ENCODE measurements at regions of chr17 and their contacts with region 1.

Region 1: DNA sequence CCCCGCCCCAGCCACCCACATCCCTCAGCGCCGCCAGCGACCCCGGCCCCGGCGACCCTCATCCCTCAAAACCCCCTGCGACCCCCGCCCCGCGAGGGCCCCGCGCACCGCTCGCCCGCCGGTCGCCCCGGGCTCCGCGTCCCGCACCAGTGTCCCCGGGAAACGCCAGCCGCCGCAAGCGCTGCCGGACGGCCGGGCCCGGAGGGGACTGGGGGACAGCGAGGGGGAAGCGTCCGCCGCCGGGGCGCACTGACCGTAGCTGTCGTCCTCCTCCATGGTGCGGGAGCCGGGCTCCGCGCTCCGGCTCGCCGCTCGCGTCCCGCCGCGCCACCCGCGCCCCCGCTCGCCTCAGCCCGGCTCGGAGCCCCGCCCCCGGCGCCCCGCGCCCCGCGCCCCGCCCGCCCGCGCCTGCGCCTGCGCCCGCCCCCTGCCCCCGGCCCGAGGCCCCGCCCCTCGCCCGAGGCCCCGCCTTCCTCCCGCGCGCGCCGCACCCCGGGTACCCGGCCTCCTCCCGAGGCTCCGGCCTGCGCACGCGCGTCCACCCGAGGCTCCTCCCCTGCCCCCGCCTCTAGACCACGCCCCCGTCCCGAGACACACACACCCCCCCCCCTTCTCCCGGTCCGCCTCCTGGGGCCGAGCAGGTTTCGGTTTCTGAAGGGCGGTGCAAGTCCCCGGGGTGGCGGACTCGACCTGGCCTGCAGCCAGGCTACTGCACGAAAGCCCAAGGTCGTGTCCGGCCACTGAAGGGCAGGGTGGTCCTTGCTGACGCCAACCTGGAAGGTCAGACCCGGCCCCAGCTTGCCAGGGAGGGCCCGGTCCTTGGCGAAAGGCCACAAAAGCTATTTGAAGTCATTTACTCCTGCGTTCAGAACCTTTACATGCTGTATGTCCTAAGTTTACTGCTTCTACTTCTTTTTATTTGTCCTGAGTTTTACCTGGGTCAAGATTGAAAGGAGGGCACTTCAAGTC is at the start of gene CYTH1:
- DNase-seq: peak; percentile 92 to 97 (median 94)
- H3K4me3 ChIP-seq: peak within 1 kb of the TSS; percentile 69 to 98 (median 86)
- H3K27ac ChIP-seq: peak within 1 kb of the TSS; percentile 38 to 99 (median 94)
- H3K27me3 ChIP-seq: no peaks in the 10 kb centered on the region
- CTCF ChIP-seq: peak in 1 of 56 donors; percentile 2
- total RNA-seq, gene CYTH1: 70.0 to 339 (median 108) TPM

Region 2: DNA sequence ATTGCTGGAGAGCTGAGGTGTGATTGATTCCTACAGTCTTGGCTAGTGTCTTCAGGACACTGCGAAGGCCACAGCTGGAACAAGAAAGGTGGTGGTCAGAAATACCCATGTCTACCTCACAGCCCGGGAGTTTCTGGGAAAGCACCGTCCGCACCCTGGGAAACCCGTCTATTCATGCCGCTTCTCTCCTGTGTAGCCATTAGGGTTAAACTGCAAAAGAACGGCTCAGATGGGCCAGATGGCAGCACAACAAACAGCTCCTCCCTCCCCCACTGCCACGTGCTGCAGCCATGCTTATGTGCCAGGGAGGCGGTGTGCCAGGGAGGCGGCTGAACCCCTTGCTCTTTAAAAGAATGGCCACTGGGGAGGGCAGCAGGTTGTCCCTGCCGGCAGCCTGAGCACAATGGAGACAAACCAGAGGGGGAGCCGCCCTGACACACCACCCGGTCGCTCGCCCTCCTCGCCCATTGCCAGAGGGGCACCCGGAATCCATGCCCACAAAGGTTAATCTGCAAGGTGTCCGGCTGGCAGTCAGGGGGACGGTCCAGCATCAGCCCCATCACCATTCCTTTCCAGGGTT is 65.3 kb before region 1 on chr17:
- intact Hi-C with region 1: loop called in 1 of 2 experiments (anchors 1 kb)
- DNase-seq: peak; percentile 91 to 97 (median 94)
- H3K4me3 ChIP-seq: peak overlapping the region; percentile 39 to 93 (median 61)
- H3K27ac ChIP-seq: peak overlapping the region; percentile 79 to 99 (median 96)
- H3K27me3 ChIP-seq: no peaks in the 10 kb centered on the region
- CTCF ChIP-seq: peak in 25 of 56 donors; percentile 10 to 41 (median 28)

Region 3: GRCh38 chr17:78723001-78723796 is 59.0 kb before region 1 on chr17:
- intact Hi-C with region 1: loop called in 1 of 2 experiments (anchors 1 kb)
- DNase-seq: peak; percentile 86 to 96 (median 95)
- H3K4me3 ChIP-seq: peak overlapping the region; percentile 59 to 93 (median 78)
- H3K27ac ChIP-seq: peak overlapping the region; percentile 86 to 99 (median 97)
- H3K27me3 ChIP-seq: no peaks in the 10 kb centered on the region
- CTCF ChIP-seq: peak in 14 of 56 donors; percentile 6 to 46 (median 16)

Region 4: DNA sequence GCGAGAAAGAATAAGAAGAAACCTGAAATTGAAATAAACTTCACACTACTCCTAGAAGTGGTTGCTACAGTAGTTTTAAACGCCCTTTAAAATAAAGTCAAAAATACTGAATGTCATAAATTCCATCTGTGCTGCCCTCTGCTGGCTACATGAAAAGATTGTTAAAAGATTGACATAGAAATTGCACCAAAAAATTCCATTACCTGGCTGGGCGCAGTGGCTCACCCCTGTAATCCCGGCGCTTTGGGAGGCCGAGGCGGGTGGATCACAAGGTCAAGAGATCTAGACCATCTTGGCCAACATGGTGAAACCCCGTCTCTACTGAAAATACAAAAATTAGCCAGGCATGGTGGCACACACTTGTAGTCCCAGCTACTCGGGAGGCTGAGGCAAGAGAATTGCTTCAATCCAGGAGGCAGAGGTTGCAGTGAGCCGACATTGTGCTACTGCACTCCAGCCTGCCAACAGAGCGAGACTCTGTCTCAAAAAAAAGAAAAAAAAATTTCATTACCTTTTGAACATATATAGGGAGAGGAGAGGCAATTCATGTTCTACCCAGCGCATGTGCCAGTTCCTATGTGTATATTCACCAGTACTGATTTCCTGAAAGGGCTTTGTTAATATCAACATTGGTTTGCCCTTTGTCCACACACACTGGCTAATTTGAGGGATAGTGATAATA is 36.7 kb before region 1 on chr17:
- intact Hi-C with region 1: no loop called
- DNase-seq: peak in 1 of 10 donors; percentile 46
- H3K4me3 ChIP-seq: peak overlapping the region in 1 of 59 donors; percentile 8
- H3K27ac ChIP-seq: peak overlapping the region in 24 of 59 donors; percentile 2 to 61 (median 24)
- H3K27me3 ChIP-seq: no peaks in the 10 kb centered on the region
- CTCF ChIP-seq: peak; percentile 61 to 86 (median 76)

Region 5: DNA sequence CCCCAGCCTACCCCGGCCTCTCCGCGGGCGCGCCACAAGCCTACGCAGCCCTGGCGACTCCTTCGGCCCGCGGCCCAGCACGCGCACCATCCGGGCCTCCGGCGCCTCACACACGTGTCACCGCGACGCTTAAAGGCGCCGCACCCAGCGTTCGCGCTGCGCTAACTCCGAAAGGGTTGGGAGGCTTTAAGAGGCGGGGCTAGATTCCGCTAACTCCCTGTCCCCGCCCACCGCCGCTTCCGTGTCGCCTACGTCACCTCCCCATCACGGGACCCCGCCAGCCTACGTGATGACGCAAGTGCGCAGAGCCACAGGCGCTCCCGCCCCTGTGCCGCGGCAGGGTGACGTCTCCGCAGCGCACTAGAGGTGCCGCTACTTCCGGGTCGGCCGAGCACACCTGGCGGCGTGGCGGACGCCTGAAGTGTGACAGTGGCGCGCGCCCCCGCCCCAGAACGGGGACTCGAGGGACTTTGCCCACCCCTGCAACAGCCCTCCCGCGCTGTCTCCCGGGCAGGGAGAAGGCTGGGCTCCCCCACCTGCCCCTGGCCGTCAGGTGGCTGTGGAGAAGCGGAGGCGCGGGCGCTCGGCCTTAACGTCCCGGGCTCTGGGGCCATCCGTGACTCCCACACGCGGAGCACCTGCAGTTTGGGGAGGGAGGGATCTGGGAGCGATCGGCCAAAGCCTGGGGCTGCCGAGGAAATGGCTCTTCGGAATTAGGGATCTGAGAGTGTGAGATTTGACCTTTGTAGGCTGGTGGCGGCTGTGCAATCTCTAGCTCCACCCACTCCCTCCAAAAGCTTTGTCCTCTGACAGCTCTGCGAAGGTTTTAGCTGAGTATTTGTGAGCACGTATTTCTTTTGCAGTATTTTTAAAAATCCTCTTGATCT is 58.7 kb after region 1 on chr17 and contains the start of gene USP36:
- intact Hi-C with region 1: loop called in 1 of 2 experiments (anchors 5 kb)
- DNase-seq: peak; percentile 100
- H3K4me3 ChIP-seq: peak within 1 kb of the TSS; percentile 76 to 100 (median 97)
- H3K27ac ChIP-seq: peak within 1 kb of the TSS; percentile 88 to 100 (median 97)
- H3K27me3 ChIP-seq: no peaks in the 10 kb centered on the region
- CTCF ChIP-seq: peak in 27 of 56 donors; percentile 5 to 53 (median 29)
- total RNA-seq, gene USP36: 39.1 to 90.9 (median 60.5) TPM

Measured in dorsolateral prefrontal cortex (tissue), 120 donors.